ENCODE measurements at regions of chr13 and their contacts with region 1.

Region 1: DNA sequence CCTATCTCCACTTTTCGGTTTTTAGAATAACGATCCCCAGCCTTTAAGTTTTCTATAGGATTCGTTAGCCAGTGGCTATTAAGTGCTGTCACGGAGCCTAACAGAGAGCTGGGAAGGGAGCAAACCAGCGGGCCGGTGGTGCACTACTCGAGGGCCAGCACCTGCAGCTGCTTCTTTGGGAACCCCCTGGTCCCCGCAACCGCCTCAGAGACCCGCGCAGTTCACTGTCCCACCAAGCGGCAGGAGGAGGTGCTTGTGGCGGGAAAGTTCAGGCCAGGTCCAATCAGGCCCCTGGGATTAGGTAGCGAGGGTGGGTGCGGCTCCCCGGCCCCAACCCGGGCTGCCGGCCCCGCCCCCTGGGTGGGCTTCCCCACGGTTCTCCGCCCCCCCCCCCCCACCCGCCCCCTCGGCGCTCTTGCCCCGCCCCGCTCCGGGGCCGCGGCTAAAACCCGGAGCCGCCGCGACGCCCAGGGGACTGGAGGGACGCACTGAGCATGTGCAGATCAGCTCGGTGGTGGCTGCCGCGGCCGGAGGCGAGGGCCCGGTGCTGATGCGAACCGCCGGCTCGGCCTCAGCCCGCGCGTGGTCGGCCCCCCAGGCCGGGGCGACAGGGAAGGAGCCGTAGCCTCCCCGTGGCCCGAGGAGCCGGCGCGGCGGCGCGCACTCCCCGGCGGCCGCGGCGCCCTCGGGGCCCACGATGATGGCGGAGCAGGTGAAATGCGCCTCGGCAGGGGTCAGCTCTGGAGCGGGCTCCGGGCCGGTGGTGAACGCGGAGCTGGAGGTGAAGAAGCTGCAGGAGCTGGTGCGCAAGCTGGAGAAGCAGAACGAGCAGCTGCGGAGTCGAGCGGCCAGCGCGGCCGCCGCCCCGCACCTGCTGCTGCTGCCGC is at the start of gene SLAIN1:
- DNase-seq: peak; percentile 83
- ATAC-seq: peak; percentile 80
- H3K4me3 Mint-ChIP-seq: peak within 1 kb of the TSS; percentile 97
- H3K27ac Mint-ChIP-seq: peak within 1 kb of the TSS; percentile 73
- H3K4me1 Mint-ChIP-seq: peaks cover 36% of the 10 kb centered on the region
- H3K27me3 Mint-ChIP-seq: no peaks in the 10 kb centered on the region
- CTCF ChIP-seq: no peak
- total RNA-seq, gene SLAIN1: 26.5 to 32.0 TPM

Region 2: DNA sequence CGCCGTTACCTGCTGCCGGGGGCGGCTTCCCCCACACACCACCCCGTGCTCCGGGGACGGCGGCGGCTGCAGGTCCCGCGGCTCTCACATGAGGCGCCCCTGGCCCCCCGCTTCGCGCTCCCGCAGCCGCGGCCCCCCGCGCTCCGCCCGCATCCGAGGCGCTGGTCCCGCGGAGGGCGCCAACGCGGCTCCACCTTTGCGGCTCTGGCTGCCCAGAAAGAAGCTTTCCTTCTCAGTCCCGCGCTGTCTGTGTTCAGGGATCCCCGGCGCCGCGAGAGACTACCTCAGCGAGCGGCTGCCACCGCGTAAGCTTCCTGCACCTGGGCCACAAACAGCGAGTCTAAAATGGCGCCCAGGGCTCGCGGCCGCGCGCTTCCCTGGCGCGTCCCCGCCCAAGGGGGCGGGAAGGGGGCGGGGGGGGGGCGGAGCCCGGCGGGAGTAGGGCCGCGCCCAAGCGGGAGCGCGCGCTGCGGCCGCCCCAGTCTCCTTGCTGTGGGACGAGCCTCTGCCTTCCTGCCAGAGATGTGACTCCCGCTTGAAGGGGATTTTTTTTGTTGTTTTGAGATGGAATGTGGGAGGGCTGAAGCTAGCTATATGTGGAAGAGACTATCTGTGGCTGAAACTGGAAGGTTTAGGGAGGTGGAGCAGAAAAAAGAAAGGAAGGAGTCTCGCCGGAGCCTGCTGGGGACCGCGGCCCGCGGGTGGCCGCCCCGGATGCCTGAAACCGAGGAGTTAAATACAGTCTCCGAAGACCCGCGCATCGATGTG is 670.5 kb before region 1 on chr13 and contains the start of gene FBXL3:
- CTCF ChIA-PET with region 1: no interaction called
- POLR2A ChIA-PET with region 1: no interaction called
- intact Hi-C with region 1: loop called (anchors 10 kb)
- DNase-seq: peak; percentile 83
- ATAC-seq: peak; percentile 57
- H3K4me3 Mint-ChIP-seq: peak within 1 kb of the TSS; percentile 98
- H3K27ac Mint-ChIP-seq: peak within 1 kb of the TSS; percentile 94
- H3K4me1 Mint-ChIP-seq: peaks cover 43% of the 10 kb centered on the region
- H3K27me3 Mint-ChIP-seq: no peaks in the 10 kb centered on the region
- CTCF ChIP-seq: no peak
- total RNA-seq, gene FBXL3: 32.8 to 34.3 TPM

Region 3: DNA sequence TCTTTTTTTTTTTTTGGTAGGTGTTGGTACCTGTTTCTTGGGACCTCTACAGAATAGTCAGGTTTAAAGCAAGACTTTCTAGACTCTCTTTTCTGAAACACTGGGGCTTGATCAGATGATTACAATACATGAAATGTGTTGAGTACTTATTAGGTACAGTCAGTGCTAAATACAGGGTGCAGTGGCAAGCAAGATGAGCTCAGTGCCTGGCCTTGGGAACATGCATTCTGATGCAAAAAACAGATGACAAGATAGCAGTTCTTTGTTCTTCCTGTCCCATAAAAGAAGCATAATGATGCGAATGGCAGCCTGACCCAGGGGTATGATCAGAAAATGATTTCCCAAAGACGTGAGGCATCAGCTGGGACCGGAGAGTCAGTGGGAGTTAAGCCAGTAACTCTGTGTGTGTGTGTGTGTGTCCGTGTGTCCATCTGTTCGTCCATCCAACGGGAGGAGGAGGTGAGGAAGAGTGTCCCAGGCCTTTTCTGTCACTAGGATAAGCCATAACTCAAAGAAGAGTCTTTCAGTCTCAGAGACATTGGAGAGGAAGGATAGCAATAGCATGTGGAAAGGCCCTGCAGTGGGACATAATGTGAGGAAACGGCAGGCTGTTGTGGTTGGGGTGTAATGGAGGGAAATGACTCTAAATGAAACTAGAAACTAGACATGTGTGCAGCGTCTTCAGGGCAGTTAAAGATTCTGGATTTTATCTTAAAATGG is 32.2 kb after region 1 on chr13:
- CTCF ChIA-PET with region 1: interaction called, 3 read pairs
- POLR2A ChIA-PET with region 1: interaction called, 3 read pairs
- intact Hi-C with region 1: loop called (anchors 5 kb)
- DNase-seq: peak; percentile 71
- ATAC-seq: peak; percentile 97
- H3K4me3 Mint-ChIP-seq: peak overlapping the region; percentile 37
- H3K27ac Mint-ChIP-seq: peak overlapping the region; percentile 78
- H3K4me1 Mint-ChIP-seq: peaks cover 37% of the 10 kb centered on the region
- H3K27me3 Mint-ChIP-seq: no peaks in the 10 kb centered on the region
- CTCF ChIP-seq: no peak

Region 4: DNA sequence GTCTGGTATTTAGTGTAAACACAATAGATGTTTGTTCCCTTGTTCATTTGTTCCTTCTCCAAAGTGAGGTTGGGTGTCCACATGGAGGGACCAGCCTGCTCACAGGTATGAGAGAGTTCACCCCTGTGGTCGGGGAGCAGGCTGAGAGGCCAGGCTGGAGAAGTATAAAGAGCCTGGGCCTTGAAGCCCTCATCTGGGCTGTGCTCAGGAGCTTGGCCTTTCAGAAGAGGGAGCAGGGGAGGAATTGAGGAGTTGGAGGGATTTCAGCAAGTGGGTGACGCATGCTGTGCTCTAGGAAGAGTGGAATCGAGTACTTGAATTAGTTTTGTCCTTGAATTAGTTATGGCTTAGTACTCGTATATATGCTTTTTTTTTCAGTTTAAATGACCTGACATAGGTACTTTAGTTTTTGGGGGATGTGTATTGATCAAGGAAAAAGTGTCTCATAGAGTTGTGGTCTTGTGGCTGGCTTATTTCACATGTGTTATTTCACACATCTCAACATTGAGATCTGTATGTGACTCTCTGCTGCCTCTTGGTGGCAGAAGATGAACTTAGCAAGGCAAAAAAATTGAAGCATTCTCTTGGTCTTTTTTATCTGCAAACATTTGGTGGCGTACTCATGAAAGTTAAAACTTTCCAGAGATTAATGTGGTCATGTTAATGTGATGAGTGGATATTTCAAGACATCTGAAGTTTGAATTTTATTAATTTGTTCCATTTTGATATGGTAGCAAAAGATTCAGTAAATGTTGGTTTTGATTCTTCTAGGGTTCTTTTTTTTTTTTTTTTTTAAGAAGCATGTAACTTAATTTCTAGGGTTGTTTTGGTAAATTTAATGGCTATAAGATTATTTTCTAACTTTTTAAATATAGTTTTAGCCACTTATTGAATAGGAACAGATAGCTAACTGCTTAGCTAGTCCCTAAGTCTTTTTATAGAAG is 54.3 kb after region 1 on chr13:
- CTCF ChIA-PET with region 1: interaction called, 4 read pairs
- POLR2A ChIA-PET with region 1: interaction called, 7 read pairs
- intact Hi-C with region 1: loop called (anchors 5 kb)
- DNase-seq: peak; percentile 70
- ATAC-seq: peak; percentile 92
- H3K4me3 Mint-ChIP-seq: peak overlapping the region; percentile 40
- H3K27ac Mint-ChIP-seq: peak overlapping the region; percentile 66
- H3K4me1 Mint-ChIP-seq: peaks cover 18% of the 10 kb centered on the region
- H3K27me3 Mint-ChIP-seq: no peaks in the 10 kb centered on the region
- CTCF ChIP-seq: peak; percentile 85

Region 5: DNA sequence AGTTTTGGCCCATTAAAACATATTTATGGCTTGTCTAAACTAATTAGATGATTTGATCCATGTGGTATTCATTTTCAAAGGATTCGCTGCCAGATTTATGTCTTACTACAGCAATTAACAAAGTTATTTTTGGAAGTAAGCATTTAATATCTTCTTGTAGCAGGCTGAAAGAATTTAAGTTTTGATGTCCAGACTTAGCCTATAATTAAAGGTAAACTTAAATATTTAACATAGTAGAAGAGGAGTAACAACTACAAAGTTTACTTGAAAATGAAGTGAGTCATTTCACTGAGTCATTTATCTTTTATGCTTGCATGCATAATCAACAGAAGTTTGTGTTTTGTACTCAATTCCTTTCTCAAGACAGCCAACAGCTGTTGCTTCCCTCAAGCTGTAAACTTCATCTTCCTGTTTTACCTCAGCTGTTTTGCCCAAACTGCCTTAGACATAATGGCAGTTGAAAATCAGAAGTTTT is 163.1 kb after region 1 on chr13:
- CTCF ChIA-PET with region 1: no interaction called
- POLR2A ChIA-PET with region 1: no interaction called
- intact Hi-C with region 1: no loop called
- DNase-seq: no peak
- ATAC-seq: no peak
- H3K4me3 Mint-ChIP-seq: no peak overlapping the region
- H3K27ac Mint-ChIP-seq: no peak overlapping the region
- H3K4me1 Mint-ChIP-seq: no peaks in the 10 kb centered on the region
- H3K27me3 Mint-ChIP-seq: peaks cover 4% of the 10 kb centered on the region
- CTCF ChIP-seq: no peak

Measured in activated CD8-positive, alpha-beta T cell treated with anti-CD3 and anti-CD28 coated beads for 36 hours (primary cell).